ENCODE measurements at regions of chr3 and their contacts with region 1.

Region 1: GRCh38 chr3:175270198-175270837 is 411.2 kb downstream of the NAALADL2 start:
- DNase-seq: peak; percentile 62
- ATAC-seq: peak; percentile 43
- H3K4me3 ChIP-seq: no peak overlapping the region
- H3K27ac ChIP-seq: peak overlapping the region; percentile 89; the same call in 1 of the 2 replicates
- H3K4me1 ChIP-seq: peaks cover 7% of the 10 kb centered on the region
- H3K27me3 ChIP-seq: no peaks in the 10 kb centered on the region
- CTCF ChIP-seq: no peak
- POLR2A ChIP-seq: no peak
- RAD21 ChIP-seq: no peak

Region 2: DNA sequence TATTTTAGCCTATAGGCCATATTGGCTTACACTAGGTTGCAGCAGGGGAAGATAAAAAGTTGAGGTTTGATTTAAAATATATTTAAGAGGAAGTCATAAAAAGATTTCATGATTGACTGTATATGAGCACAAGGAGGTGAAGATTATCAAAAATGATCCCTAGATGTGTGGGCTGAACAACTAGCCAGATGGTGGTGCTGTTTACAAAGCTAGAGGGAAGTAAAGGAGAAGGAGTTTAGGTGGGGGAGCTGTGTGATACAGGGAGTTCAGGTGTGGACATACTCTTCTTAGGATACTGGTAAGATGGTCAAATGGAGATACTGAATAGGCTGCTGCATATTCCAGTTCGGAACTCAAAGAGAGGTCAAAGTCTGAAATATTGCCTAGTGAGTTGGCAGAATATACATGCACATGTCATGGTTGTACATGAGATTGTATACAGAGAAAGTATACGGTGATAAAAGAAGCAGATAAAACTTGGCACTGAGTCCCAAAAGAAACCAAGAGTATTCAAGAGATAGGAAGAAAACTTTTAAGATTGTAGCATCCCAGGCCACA is 1145.0 kb before region 1 on chr3:
- CTCF ChIA-PET with region 1: no interaction called
- POLR2A ChIA-PET with region 1: no interaction called
- dilution Hi-C with region 1: no loop called
- in situ Hi-C with region 1: no loop called
- intact Hi-C with region 1: loop called (anchors 10 kb)
- DNase-seq: peak; percentile 65
- ATAC-seq: peak; percentile 87
- H3K4me3 ChIP-seq: no peak overlapping the region
- H3K27ac ChIP-seq: no peak overlapping the region
- H3K4me1 ChIP-seq: peaks cover 5% of the 10 kb centered on the region; the same call in 1 of the 2 replicates
- H3K27me3 ChIP-seq: no peaks in the 10 kb centered on the region
- CTCF ChIP-seq: peak; percentile 80
- POLR2A ChIP-seq: no peak
- RAD21 ChIP-seq: peak; percentile 91

Region 3: GRCh38 chr3:174949526-174949925 is 320.8 kb before region 1 on chr3:
- CTCF ChIA-PET with region 1: no interaction called
- POLR2A ChIA-PET with region 1: no interaction called
- dilution Hi-C with region 1: no loop called
- in situ Hi-C with region 1: no loop called
- intact Hi-C with region 1: loop called (anchors 5 kb)
- DNase-seq: peak; percentile 97
- ATAC-seq: peak; percentile 72
- H3K4me3 ChIP-seq: no peak overlapping the region
- H3K27ac ChIP-seq: peak overlapping the region; percentile 86
- H3K4me1 ChIP-seq: peaks cover 11% of the 10 kb centered on the region
- H3K27me3 ChIP-seq: no peaks in the 10 kb centered on the region
- CTCF ChIP-seq: no peak
- POLR2A ChIP-seq: no peak
- RAD21 ChIP-seq: peak; percentile 10; the same call in 1 of the 2 replicates

Region 4: DNA sequence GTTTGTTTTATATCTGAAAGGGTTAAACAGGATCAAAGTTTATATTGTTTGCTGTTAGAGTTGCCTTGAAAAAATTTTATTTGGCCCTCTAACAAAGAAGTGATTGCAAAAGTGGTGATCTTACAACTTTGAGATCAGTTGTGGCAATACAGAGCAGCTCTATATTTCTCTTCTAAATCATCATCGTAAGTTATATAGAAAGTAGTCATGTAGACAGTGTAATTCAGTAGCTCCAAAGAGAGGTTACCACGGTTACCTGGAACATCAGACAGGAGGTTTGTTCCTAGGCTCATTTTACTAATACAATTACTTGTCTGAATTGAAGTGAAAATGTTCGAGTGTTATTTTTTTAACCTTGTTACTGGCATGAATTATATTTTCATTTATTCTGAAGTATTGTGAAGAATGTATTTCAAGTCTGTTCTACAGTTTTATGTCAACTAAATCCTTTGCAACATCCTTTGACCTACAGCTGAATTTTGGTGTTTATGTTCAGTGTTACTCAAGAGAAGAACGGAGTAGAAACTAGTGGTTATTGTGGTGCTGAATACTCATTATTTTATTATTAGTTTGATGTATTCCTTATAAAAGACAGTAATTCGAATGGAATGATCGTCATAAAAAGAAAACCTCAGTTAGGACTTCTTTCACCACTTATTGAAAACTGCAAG is 196.9 kb before region 1 on chr3:
- CTCF ChIA-PET with region 1: no interaction called
- POLR2A ChIA-PET with region 1: no interaction called
- dilution Hi-C with region 1: no loop called
- in situ Hi-C with region 1: no loop called
- intact Hi-C with region 1: loop called (anchors 10 kb)
- DNase-seq: no peak
- ATAC-seq: no peak; the same call in 1 of the 2 replicates
- H3K4me3 ChIP-seq: no peak overlapping the region
- H3K27ac ChIP-seq: no peak overlapping the region; the same call in 1 of the 2 replicates
- H3K4me1 ChIP-seq: peaks cover 7% of the 10 kb centered on the region
- H3K27me3 ChIP-seq: no peaks in the 10 kb centered on the region
- CTCF ChIP-seq: no peak
- POLR2A ChIP-seq: no peak
- RAD21 ChIP-seq: no peak

Region 5: GRCh38 chr3:175392653-175393052 is 122.3 kb after region 1 on chr3:
- CTCF ChIA-PET with region 1: no interaction called
- POLR2A ChIA-PET with region 1: no interaction called
- dilution Hi-C with region 1: no loop called
- in situ Hi-C with region 1: no loop called
- intact Hi-C with region 1: loop called (anchors 10 kb)
- DNase-seq: peak; percentile 61
- ATAC-seq: no peak
- H3K4me3 ChIP-seq: no peak overlapping the region
- H3K27ac ChIP-seq: no peak overlapping the region
- H3K4me1 ChIP-seq: peaks cover 3% of the 10 kb centered on the region; the same call in 1 of the 2 replicates
- H3K27me3 ChIP-seq: no peaks in the 10 kb centered on the region
- CTCF ChIP-seq: no peak
- POLR2A ChIP-seq: no peak
- RAD21 ChIP-seq: no peak

Region 6: DNA sequence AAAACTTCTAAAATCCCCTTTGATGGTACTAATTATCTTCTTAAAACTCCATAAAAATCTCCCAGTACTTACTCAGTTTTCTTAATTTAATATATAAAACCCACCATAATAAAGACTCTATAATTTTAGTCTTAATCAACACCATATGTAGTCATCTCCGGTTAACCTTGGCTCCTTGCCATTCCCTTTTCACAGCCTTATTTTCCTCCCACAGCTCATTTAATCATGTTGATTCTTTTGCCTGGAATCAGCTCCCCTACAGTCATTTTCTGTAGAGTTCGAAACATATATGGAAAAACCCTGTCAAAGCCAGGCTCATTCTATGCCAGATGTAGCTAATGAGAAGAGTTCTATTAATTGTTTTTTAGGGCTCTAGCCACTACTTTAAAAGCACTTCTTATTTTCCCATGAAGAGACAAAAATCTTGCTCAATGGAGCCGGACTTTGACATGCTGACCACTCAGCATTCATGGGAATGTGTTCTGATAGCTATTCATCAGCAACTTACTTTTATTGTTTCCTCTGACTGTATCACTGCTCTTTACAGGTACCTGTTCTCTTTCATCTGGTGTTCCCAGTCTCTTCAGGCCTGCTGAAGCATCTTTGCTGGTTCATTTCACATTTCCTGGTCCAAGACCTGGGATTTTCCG is 162.2 kb after region 1 on chr3:
- CTCF ChIA-PET with region 1: no interaction called
- POLR2A ChIA-PET with region 1: no interaction called
- dilution Hi-C with region 1: no loop called
- in situ Hi-C with region 1: no loop called
- intact Hi-C with region 1: loop called (anchors 1 kb)
- DNase-seq: peak; percentile 56
- ATAC-seq: no peak; the same call in 1 of the 2 replicates
- H3K4me3 ChIP-seq: peak overlapping the region; percentile 25; the same call in 1 of the 2 replicates
- H3K27ac ChIP-seq: peak overlapping the region; percentile 95
- H3K4me1 ChIP-seq: peaks cover 7% of the 10 kb centered on the region; the same call in 1 of the 2 replicates
- H3K27me3 ChIP-seq: no peaks in the 10 kb centered on the region
- CTCF ChIP-seq: no peak
- POLR2A ChIP-seq: no peak
- RAD21 ChIP-seq: no peak